Mammary epithelial cell (primary cell): ENCODE measurements at regions of chr13 and their contacts with region 1.

Region 1: GRCh38 chr13:94641409-94641941 is 39.8 kb downstream of the GPR180 start:
- DNase-seq: peak; percentile 86
- H3K4me3 ChIP-seq: no peak overlapping the region
- H3K27ac ChIP-seq: peak overlapping the region; percentile 91
- H3K4me1 ChIP-seq: peaks cover 24% of the 10 kb centered on the region
- H3K27me3 ChIP-seq: no peaks in the 10 kb centered on the region
- CTCF ChIP-seq: no peak

Region 2: GRCh38 chr13:94656766-94657165 is 15.3 kb after region 1 on chr13:
- CTCF ChIA-PET with region 1: no interaction called
- dilution Hi-C with region 1: no loop called
- in situ Hi-C with region 1: no loop called
- intact Hi-C with region 1: loop called (anchors 1 kb)
- DNase-seq: peak; percentile 82
- H3K4me3 ChIP-seq: no peak overlapping the region
- H3K27ac ChIP-seq: no peak overlapping the region
- H3K4me1 ChIP-seq: peaks cover 8% of the 10 kb centered on the region
- H3K27me3 ChIP-seq: no peaks in the 10 kb centered on the region
- CTCF ChIP-seq: peak in 1 of 2 donors; percentile 12